ENCODE measurements at regions of chr6 and their contacts with region 1.

Region 1: DNA sequence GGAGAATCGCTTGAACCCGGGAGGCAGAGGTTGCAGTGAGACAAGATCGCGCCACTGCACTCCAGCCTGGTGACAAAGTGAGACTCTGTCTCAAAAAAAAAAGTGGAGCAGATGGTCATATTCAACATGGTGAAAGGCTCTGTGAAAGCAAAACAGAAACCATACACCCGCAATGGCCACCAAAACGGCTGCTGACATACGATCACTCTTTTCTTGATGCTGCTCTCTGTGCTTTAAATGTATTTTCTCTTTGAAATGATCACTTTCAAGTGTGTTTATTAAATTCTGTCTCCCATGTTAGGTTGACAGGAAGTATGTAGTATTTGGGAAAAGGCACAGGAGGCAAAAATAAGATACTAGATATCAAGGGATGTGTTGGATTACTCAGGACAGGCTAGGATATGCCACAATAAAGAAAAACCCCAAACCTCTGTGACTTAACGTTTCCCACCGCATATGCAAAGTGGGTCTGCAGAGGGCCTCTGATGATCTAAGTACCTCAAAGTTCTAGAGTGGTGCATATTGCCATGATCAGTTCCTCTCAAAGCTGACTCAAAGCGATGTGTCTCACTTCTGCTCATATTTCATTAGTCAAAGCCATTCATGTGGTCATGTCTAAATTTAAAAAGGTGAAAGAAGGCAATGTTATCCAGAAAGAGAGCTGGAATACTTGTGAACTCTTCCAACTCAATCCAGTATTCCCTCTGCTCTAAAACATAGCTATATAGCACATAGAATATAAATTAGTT is 155.1 kb upstream of the SOX4 start:
- DNase-seq: peak; percentile 68
- H3K4me3 Mint-ChIP-seq: no peak overlapping the region
- H3K27ac Mint-ChIP-seq: no peak overlapping the region
- H3K4me1 Mint-ChIP-seq: peaks cover 15% of the 10 kb centered on the region
- H3K27me3 Mint-ChIP-seq: peaks cover 5% of the 10 kb centered on the region

Region 2: GRCh38 chr6:20534295-20535262 is 903.8 kb before region 1 on chr6 and contains the start of gene CDKAL1:
- CTCF ChIA-PET with region 1: no interaction called
- intact Hi-C with region 1: loop called (anchors 2 kb)
- DNase-seq: peak; percentile 96
- H3K4me3 Mint-ChIP-seq: peak within 1 kb of the TSS; percentile 95
- H3K27ac Mint-ChIP-seq: peak within 1 kb of the TSS; percentile 94
- H3K4me1 Mint-ChIP-seq: peaks cover 33% of the 10 kb centered on the region
- H3K27me3 Mint-ChIP-seq: no peaks in the 10 kb centered on the region
- total RNA-seq, gene CDKAL1: 20.4 TPM

Region 3: GRCh38 chr6:20708367-20709124 is 729.9 kb before region 1 on chr6:
- CTCF ChIA-PET with region 1: no interaction called
- intact Hi-C with region 1: loop called (anchors 5 kb)
- DNase-seq: peak; percentile 62
- H3K4me3 Mint-ChIP-seq: no peak overlapping the region
- H3K27ac Mint-ChIP-seq: no peak overlapping the region
- H3K4me1 Mint-ChIP-seq: peaks cover 54% of the 10 kb centered on the region
- H3K27me3 Mint-ChIP-seq: no peaks in the 10 kb centered on the region

Region 4: GRCh38 chr6:20919677-20920385 is 518.6 kb before region 1 on chr6:
- CTCF ChIA-PET with region 1: no interaction called
- intact Hi-C with region 1: loop called (anchors 1 kb)
- DNase-seq: peak; percentile 33
- H3K4me3 Mint-ChIP-seq: no peak overlapping the region
- H3K27ac Mint-ChIP-seq: peak overlapping the region; percentile 3
- H3K4me1 Mint-ChIP-seq: peaks cover 25% of the 10 kb centered on the region
- H3K27me3 Mint-ChIP-seq: no peaks in the 10 kb centered on the region

Region 5: GRCh38 chr6:21046276-21046675 is 392.1 kb before region 1 on chr6:
- CTCF ChIA-PET with region 1: no interaction called
- intact Hi-C with region 1: no loop called
- DNase-seq: no peak
- H3K4me3 Mint-ChIP-seq: no peak overlapping the region
- H3K27ac Mint-ChIP-seq: no peak overlapping the region
- H3K4me1 Mint-ChIP-seq: no peaks in the 10 kb centered on the region
- H3K27me3 Mint-ChIP-seq: no peaks in the 10 kb centered on the region

Region 6: DNA sequence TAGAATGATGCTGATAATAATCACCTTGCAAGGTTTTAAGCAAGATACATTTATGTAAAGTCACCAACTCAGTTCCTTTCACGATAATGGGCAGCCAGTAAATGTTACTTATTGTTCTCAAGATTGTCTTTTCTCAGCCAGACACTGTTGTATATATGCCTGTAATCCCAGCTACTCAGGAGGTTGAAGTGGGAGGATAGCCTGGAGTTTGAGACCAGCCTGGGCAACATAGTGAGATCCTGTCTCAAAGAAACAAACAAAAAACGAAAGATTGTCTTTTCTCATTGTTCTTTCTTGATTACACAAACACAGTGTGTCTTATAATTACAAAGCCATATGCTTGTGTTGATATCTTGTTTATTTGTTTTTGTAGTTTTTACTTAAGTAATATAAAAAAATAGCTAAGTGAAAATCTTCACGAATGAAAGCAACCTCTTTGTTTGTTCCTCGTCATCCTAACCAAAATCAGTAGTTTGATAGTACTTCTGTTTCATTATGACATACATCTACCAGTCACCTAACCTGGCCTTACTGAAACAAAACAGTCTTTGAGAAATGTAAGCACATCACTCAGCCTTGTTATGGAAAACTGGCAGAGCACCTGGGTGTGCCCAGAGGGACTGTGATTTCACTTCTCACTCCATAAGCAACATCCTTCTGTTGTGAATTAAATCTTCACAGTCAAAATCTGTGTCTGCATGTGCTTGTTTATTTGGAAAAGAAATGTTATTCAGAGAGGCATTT is 281.1 kb before region 1 on chr6:
- CTCF ChIA-PET with region 1: no interaction called
- intact Hi-C with region 1: loop called (anchors 1 kb)
- DNase-seq: no peak
- H3K4me3 Mint-ChIP-seq: no peak overlapping the region
- H3K27ac Mint-ChIP-seq: no peak overlapping the region
- H3K4me1 Mint-ChIP-seq: peaks cover 7% of the 10 kb centered on the region
- H3K27me3 Mint-ChIP-seq: no peaks in the 10 kb centered on the region

Region 7: DNA sequence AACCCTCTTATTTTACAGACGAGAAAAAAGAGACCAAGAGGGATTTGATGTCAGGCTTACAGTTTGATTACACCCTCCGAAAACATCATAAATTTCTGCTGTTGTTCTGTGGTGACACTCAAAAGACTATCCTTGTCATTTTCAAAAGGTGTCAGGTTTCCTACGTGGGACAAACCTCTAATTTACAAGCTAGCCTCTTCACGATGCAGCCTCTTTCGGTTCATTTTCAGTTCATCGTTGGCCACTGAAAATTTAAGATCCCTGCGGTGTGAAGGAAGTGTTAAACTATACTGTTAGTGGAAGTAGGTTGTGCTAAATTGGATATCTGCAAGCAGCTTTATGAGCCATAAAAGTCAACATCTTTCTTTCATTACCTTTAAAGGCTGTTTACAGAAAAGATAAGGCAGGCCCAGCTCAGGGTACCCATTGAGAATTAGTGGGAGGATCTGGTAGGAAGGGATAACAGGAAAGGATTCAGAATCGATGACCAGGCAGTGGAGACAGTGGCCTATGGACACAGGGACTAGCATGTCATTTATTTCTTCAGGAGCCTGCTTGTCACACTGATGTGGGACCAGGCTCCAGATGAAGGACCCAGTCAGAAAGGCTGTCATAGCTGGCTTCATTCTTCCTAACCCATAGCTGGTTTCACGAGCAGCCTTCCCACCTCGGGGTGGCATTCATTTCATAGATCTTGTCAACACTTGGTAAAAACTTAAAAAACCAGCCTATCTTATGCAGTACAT is 173.9 kb before region 1 on chr6:
- CTCF ChIA-PET with region 1: no interaction called
- intact Hi-C with region 1: loop called (anchors 1 kb)
- DNase-seq: no peak
- H3K4me3 Mint-ChIP-seq: no peak overlapping the region
- H3K27ac Mint-ChIP-seq: no peak overlapping the region
- H3K4me1 Mint-ChIP-seq: peaks cover 13% of the 10 kb centered on the region
- H3K27me3 Mint-ChIP-seq: peaks cover 3% of the 10 kb centered on the region

Region 8: GRCh38 chr6:21402368-21402767 is 36.0 kb before region 1 on chr6:
- CTCF ChIA-PET with region 1: no interaction called
- intact Hi-C with region 1: loop called (anchors 1 kb)
- DNase-seq: peak; percentile 37
- H3K4me3 Mint-ChIP-seq: no peak overlapping the region
- H3K27ac Mint-ChIP-seq: no peak overlapping the region
- H3K4me1 Mint-ChIP-seq: peaks cover 6% of the 10 kb centered on the region
- H3K27me3 Mint-ChIP-seq: peaks cover 2% of the 10 kb centered on the region

Measured in activated naive CD4-positive, alpha-beta T cell treated with anti-CD3 and anti-CD28 coated beads for 36 hours (primary cell).